Posterior vena cava (tissue), 2 donors: ENCODE measurements at regions of chr10 and their contacts with region 1.

Region 1: DNA sequence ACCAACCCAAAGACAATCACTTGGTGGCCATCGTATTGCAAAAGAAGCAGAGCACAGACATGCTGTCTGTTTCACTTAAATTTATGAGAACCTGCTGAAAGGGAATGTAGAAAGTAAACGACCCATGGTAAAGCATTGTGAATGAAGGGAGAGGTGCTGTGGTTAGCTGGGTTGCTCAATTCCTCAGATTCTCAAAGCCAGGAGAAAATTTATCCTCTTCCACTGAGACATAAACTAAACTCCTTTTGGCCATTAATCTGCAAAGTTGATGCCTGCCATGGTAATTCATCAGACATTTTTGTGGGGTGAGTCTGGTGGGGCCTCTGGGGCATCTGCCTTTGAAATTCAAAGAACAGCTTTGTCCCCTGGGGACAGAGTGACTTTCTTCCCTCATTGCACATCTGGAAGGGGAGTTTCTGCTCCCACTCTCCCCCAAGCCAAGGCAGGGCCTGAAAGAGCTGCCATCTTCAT is 951.0 kb downstream of the LRMDA start:
- DNase-seq: no peak

Region 2: DNA sequence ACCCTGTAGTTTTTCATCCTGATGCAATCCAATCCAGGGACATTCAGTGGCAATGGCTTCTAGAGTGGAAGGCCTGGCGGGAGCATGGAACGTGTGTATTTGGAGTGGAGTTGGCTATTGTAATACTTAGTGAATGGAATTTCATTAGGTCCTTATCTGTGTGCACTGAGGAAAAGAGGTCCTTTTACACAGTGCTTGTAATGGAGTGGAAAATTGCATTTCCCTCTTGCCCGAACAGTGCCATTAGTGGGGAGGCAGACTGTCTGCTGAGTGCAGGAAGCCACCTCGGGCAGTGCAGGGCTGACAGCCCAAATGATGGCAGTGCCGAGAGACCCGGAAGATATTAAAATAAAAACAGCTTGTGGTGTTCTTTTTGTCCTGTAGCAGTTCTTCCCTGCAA is 164.4 kb before region 1 on chr10:
- intact Hi-C with region 1: no loop called
- DNase-seq: no peak

Region 3: DNA sequence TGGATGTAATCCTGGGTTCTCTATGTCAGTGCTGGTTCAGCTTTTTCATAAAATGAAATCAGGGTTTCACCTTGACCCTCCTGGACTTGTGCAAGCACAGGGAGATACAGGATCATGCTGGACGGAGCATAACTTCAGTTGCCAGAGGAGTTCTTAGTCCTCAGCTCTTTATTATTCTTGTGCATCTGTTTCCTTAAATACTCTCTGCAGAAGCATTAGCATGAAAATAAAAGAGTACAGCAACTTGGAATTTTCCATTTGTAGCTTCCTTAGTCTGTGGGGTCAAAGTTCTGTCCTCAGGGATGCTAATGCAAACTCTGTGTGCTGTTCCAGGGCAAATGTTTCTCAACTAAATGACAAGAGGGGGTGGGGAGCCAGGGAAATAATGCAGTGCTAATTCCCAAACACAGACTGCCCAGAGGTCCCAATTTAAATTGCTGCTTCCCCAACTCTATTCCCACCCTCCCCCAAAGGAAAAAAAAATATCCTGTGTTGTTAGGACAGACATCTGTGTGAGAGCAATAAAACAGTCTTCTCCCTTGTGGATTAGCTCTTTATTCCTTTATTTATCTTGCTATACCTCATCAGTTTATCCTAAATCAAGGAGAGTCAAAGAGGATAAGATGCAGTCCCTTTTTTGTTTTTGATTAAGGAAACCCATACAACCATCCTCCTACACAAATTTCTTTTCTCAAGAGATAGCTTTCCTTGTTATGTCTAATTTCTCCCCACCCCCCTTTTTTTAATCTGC is 46.0 kb before region 1 on chr10:
- intact Hi-C with region 1: loop called in 1 of 2 experiments (anchors 10 kb)
- DNase-seq: no peak